Sigmoid colon (tissue), 7 donors: ENCODE measurements at regions of chr17 and their contacts with region 1.

Region 1: DNA sequence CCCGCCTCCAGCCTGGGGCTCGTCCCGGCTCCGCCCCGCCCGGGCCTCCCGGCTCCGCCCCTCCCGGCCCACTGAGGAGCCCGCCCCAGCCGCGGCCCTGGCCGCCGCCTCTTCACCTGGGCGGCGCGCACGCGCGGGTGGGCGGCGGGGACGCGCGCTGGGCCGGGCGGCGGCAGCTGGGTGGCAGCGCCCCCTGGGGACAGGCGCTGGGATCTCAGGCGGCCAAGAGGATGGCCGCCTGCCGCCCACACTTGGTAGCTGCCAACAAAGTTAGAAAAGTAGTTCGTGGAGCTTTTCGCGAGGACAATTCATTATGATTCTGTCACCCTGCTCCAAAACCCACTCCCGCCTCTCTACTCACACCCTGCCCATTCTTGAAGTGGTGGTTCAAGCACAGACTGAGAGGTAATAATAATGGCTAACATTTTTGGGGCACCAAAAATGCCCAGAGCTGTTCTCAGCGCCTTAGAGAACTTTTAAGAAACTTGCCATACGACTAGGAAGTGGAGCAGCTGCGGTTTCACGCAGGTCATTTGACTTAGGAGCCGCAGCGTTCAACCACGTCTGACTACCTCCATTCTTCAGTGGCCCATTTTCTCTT is 340 bp upstream of the MYO1D start:
- DNase-seq: peak; percentile 94
- H3K4me3 ChIP-seq: peak overlapping the region; percentile 56 to 89 (median 72)
- H3K27ac ChIP-seq: peak overlapping the region; percentile 74 to 86 (median 80)
- H3K4me1 ChIP-seq: peaks cover 0 to 22% (median 18%) of the 10 kb centered on the region in 4 donors
- H3K27me3 ChIP-seq: no peaks in the 10 kb centered on the region
- CTCF ChIP-seq: peak; percentile 41 to 81 (median 76)
- EP300 ChIP-seq: no peak
- POLR2A ChIP-seq: no peak

Region 2: DNA sequence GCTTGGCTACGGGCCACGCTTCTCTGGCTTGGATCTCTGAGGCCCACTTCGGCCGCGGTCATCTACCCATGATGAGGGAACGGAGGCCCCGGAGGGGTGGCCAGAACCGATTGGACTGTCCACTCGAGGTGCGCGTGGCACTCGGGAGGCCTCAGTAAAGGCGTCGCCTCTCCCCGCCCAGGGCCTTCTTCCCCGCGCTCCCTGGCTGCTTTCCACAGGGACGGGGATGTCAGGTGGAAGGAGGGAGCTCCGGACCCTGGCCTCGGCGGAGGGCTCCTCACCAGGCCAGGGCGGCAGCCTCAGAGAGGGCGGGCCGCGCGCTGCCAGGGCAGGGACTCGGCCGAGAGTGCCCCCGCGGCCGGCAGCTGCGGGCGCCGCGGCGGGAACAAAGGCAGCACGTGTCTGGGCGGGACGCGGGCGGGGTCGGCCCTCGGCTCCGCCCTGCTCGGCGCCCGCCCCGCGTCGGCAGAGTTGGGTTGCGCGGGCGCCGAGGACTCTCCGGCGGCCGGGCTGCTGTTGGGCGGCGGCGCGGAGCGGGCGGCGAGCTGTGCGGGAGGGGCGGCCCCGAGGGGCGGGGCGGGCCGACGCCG is 391.1 kb before region 1 on chr17:
- intact Hi-C with region 1: loop called (anchors 10 kb)
- DNase-seq: peak; percentile 79
- H3K4me3 ChIP-seq: peak overlapping the region; percentile 17 to 67 (median 57)
- H3K27ac ChIP-seq: peak overlapping the region; percentile 67 to 79 (median 78)
- H3K4me1 ChIP-seq: peaks cover 0 to 28% (median 25%) of the 10 kb centered on the region in 4 donors
- H3K27me3 ChIP-seq: no peaks in the 10 kb centered on the region
- CTCF ChIP-seq: no peak
- EP300 ChIP-seq: no peak
- POLR2A ChIP-seq: no peak

Region 3: GRCh38 chr17:32783602-32784001 is 93.7 kb before region 1 on chr17:
- intact Hi-C with region 1: loop called (anchors 1 kb)
- DNase-seq: no peak
- H3K4me3 ChIP-seq: no peak overlapping the region
- H3K27ac ChIP-seq: no peak overlapping the region
- H3K4me1 ChIP-seq: no peaks in the 10 kb centered on the region
- H3K27me3 ChIP-seq: no peaks in the 10 kb centered on the region
- CTCF ChIP-seq: peak; percentile 46 to 72 (median 58)
- EP300 ChIP-seq: no peak
- POLR2A ChIP-seq: no peak

Region 4: DNA sequence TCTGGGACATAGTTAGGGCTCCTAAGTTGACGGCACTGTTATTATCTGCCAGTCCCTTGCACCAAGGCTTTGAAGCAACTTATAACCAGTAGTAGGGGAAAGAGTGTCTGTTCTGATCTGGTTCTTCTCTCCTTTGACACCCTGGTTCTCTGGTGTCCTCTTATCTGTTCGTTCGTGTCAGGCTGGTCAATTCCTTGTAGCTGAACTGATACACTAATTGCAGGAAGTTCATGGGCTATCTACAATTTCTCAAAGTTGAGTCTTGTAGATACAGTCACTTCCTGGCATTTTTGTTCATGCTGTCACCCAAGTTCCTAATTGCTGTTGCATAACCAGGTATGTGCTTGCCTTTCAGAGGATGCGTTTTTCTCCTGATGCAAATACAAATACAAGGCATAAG is 17.0 kb after region 1 on chr17:
- intact Hi-C with region 1: no loop called
- DNase-seq: no peak
- H3K4me3 ChIP-seq: no peak overlapping the region
- H3K27ac ChIP-seq: no peak overlapping the region
- H3K4me1 ChIP-seq: no peaks in the 10 kb centered on the region
- H3K27me3 ChIP-seq: no peaks in the 10 kb centered on the region
- CTCF ChIP-seq: no peak
- EP300 ChIP-seq: no peak
- POLR2A ChIP-seq: no peak

Region 5: DNA sequence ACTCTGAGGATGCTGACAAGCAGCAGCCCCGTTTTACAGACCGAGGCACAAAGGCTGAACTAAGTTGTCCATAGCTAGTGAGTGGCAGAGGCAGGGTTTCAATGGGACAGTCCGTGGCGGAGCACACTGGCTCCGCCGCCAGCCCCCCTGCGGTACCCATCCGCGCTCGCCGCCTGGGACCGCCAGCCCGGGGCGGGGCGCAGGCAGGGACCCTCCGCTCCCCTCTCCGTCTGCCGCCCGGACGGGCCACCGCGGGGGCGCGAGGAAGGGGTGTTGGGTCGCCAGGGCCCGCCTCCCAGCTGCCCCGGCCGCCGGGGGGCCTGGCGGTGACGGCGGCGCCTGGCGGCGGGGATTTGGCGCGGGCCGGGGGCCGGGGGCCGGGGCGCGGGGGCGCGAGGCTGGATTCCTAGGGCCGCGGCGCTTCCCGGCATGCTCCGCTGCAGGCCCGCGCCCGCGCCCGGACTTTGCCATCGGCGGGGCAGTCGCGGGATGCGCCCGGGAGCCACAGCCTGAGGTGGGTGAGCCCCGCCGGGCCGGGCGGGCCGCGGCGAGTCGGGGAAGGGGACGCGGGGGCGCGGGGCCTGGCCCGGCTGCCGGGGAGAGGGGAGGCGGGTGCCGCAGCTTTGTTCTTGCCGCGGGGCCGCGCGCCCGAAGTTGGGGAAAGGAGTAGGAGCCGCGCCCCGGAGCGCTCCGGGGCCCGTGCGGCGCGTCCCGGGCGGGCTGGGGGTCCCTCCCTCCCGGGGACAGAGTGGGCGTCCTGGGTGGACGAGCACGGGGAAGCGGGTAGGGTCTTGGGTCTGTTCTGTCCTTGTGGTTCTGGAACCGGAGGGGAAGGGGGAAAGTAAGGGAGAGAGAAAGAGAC is 50.7 kb after region 1 on chr17 and contains the start of gene TMEM98:
- intact Hi-C with region 1: loop called (anchors 5 kb)
- DNase-seq: no peak
- H3K4me3 ChIP-seq: peak within 1 kb of the TSS; percentile 58 to 91 (median 80)
- H3K27ac ChIP-seq: peak within 1 kb of the TSS; percentile 71 to 78 (median 72)
- H3K4me1 ChIP-seq: peaks cover 0 to 20% (median 14%) of the 10 kb centered on the region in 4 donors
- H3K27me3 ChIP-seq: no peaks in the 10 kb centered on the region
- CTCF ChIP-seq: no peak
- EP300 ChIP-seq: no peak
- POLR2A ChIP-seq: no peak
- total RNA-seq, gene TMEM98: 46.0 to 88.1 (median 60.8) TPM

Region 6: DNA sequence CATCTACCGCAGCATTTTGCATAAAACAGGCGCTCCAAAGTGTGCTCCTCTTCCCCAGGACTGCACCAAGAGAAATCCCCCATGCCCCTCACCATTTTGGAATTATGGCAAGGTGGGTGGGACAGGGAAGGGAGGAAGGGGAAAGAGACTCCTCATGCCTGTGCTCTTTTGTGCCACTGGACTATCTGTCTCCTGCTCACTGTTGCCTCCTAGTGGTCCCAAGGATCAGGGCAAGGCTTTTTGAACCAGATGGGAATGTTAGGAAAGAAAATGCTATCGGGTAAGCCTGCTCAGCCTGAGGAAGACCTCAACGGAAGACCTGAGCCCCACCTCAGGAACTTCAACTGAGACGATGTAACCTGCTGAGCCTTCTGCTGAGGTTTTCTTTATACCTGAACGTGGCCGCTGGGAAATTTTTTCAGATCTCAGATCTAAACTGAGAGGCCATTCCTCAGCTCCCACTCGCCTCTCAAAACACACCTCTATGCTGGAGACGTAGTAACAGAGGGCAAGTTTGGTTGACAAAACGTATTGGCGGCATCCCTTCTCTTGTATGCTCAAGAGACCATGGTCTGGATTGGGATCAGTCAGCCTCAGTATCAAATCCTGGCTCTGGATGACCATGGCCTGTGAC is 172.6 kb after region 1 on chr17:
- intact Hi-C with region 1: no loop called
- DNase-seq: no peak
- H3K4me3 ChIP-seq: no peak overlapping the region
- H3K27ac ChIP-seq: no peak overlapping the region
- H3K4me1 ChIP-seq: no peaks in the 10 kb centered on the region
- H3K27me3 ChIP-seq: peaks cover 0 to 9% (median 0%) of the 10 kb centered on the region in 3 donors
- CTCF ChIP-seq: peak in 2 of 4 experiments; percentile 47 to 57
- EP300 ChIP-seq: no peak
- POLR2A ChIP-seq: no peak